Dorsolateral prefrontal cortex (tissue), 120 donors: ENCODE measurements at regions of chr5 and their contacts with region 1.

Region 1: GRCh38 chr5:60843936-60844905 is at the start of gene ELOVL7:
- DNase-seq: peak; percentile 43 to 84 (median 68)
- H3K4me3 ChIP-seq: peak within 1 kb of the TSS; percentile 58 to 97 (median 89)
- H3K27ac ChIP-seq: peak within 1 kb of the TSS in 57 of 59 donors; percentile 36 to 93 (median 82)
- H3K27me3 ChIP-seq: no peaks in the 10 kb centered on the region
- CTCF ChIP-seq: peak in 42 of 56 donors; percentile 11 to 65 (median 41)
- total RNA-seq, gene ELOVL7: 14.5 to 53.1 (median 29.6) TPM

Region 2: GRCh38 chr5:60699530-60700382 is 144.5 kb before region 1 on chr5 and contains the start of gene DEPDC1B:
- intact Hi-C with region 1: loop called (anchors 5 kb)
- DNase-seq: peak; percentile 81 to 95 (median 88)
- H3K4me3 ChIP-seq: peak within 1 kb of the TSS; percentile 55 to 99 (median 88)
- H3K27ac ChIP-seq: peak within 1 kb of the TSS in 56 of 59 donors; percentile 2 to 97 (median 81)
- H3K27me3 ChIP-seq: no peaks in the 10 kb centered on the region
- CTCF ChIP-seq: peak in 35 of 56 donors; percentile 1 to 59 (median 27)
- total RNA-seq, gene DEPDC1B: 0.34 to 4.5 (median 1.4) TPM in 119 of 120 experiments, not detected in the other